Dendritic cell treated with granulocyte-macrophage colony-stimulating factor and Interleukin-4, amounts not matched to agents 40 ng/mL and 50 ng/mL, for 4 days (primary cell): ENCODE measurements at regions of chr10 and their contacts with region 1.

Region 1: DNA sequence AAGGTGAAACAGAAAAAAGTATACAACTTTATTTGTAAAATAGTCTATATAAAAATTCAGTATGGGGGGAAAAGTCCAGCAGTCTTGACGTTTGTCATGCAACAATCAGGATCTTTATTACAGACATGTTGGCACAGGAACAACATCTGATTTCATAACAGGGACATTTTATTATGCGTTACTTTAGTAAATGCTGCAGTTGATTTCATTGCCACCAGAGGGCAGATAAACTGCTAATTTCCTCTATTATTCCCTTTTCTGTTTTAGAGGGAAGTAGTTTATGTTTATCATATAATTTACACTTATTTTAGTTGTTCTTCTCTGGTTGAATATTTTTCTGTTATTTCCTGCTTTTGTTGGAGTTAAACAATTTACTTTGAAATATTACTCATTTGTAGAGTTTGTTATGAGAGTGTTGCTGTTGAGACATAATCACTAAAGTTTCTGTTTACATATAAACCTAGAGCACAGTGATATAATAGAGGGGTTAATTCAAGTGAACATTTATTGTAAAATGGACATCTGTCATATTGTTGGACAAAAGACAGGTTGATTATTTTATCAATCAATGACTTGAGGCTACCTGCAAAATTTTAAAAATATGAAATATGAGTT is 3.3 kb downstream of the PLXDC2 start:
- H3K4me3 Mint-ChIP-seq: peak overlapping the region; percentile 60
- H3K27ac Mint-ChIP-seq: peak overlapping the region; percentile 65
- H3K4me1 Mint-ChIP-seq: peaks cover 39% of the 10 kb centered on the region
- H3K27me3 Mint-ChIP-seq: no peaks in the 10 kb centered on the region

Region 2: DNA sequence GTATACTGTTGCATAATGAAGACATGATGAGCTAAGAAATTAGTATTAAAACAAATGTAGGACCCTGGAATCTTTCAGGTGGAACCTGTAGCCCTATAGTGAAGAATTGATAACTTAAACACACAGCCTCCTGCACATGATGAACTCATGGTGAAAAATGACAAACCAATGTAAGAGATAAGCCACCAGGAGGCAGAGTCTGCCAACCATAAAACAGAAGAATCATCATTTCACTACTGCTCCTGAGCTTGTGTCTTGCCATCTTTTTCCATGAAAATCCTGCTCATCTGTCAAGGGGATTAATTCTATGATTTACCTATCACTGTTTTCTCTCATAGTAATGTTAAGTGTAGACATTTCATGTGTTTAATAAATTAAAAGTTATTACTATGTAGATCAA is 407.0 kb before region 1 on chr10:
- intact Hi-C with region 1: loop called (anchors 10 kb)
- H3K4me3 Mint-ChIP-seq: no peak overlapping the region
- H3K27ac Mint-ChIP-seq: no peak overlapping the region
- H3K4me1 Mint-ChIP-seq: no peaks in the 10 kb centered on the region
- H3K27me3 Mint-ChIP-seq: no peaks in the 10 kb centered on the region

Region 3: GRCh38 chr10:19638182-19638895 is 181.2 kb before region 1 on chr10:
- intact Hi-C with region 1: loop called (anchors 1 kb)
- H3K4me3 Mint-ChIP-seq: peak overlapping the region; percentile 70
- H3K27ac Mint-ChIP-seq: peak overlapping the region; percentile 94
- H3K4me1 Mint-ChIP-seq: peaks cover 23% of the 10 kb centered on the region
- H3K27me3 Mint-ChIP-seq: no peaks in the 10 kb centered on the region

Region 4: DNA sequence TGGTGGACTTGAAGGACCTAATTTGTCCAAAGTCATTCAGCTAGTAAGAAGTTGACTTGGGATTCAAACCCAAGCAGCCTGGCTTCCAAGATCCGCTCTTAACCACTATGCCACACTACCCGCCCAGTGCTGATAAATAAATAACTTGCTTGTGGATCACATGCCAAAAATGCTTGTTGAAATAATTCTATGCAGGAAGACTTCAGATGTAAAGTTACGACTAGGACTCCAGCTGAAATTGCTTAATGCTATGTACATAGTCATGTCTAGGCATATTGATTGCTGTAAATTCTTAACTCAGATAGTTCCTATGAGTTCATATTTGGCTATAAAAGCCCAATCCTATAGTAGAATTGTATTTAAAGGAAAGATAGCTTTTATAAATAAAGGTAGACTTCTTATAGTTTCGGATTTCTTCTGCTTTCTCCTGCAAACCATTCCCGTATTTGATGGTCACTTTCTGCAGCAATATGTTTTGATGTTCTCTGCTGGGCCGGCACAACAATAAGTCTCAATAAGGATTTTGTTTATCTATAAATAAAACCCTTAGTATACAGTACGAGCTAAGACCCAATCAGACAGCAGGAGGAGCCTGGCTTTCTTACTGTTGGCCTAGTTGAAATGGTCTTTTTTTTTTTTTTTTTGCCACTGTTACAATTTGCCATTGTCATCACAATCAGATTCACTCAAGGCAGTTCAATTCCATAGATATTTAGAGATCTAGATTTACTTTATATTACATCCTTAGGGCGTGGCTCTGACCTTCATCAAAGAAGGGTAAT is 73.0 kb after region 1 on chr10:
- intact Hi-C with region 1: loop called (anchors 10 kb)
- H3K4me3 Mint-ChIP-seq: no peak overlapping the region
- H3K27ac Mint-ChIP-seq: no peak overlapping the region
- H3K4me1 Mint-ChIP-seq: peaks cover 49% of the 10 kb centered on the region
- H3K27me3 Mint-ChIP-seq: no peaks in the 10 kb centered on the region

Region 5: DNA sequence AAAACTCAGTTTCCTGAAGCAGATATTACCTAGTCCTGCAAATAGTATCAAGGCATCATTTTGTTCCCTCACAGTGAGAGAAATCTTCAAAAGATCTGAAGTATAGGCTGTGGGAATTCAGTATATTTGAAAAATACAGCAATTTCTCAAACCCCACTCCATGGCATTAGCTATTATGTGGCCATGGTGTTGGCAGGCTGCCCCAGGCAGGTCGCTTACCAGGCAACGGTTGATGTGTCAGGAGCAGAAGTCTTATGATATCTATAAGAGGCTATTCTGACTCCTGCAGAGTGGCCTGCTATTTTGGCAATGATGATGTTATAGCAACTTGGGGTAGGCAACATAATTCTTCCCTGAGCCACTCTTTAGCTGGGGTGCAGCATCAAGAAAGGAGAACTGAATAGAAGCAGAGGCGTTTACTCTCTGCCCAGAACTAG is 184.6 kb after region 1 on chr10:
- intact Hi-C with region 1: loop called (anchors 5 kb)
- H3K4me3 Mint-ChIP-seq: peak overlapping the region; percentile 40
- H3K27ac Mint-ChIP-seq: peak overlapping the region; percentile 90
- H3K4me1 Mint-ChIP-seq: peaks cover 64% of the 10 kb centered on the region
- H3K27me3 Mint-ChIP-seq: no peaks in the 10 kb centered on the region

Region 6: DNA sequence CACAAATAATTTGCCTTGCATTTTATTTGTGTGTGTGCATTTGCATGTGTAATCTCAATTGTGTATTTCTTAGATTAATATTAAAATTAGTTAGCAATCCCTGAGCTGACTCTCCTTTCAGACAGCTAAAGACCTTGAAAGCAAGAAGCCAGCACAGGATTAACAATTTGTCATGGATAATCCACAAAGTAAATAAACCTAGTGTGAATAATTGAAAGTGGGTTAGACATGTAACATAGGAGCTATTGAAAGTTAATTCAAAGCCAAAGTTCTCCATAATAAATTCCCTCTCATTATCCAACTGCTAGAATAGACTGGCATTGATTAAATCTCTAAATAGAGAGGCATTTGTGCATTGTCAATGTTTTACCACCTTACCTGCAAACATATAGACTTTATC is 322.8 kb after region 1 on chr10:
- intact Hi-C with region 1: loop called (anchors 5 kb)
- H3K4me3 Mint-ChIP-seq: no peak overlapping the region
- H3K27ac Mint-ChIP-seq: no peak overlapping the region
- H3K4me1 Mint-ChIP-seq: no peaks in the 10 kb centered on the region
- H3K27me3 Mint-ChIP-seq: no peaks in the 10 kb centered on the region

Region 7: GRCh38 chr10:20776384-20777118 is 957.0 kb after region 1 on chr10:
- intact Hi-C with region 1: loop called (anchors 10 kb)
- H3K4me3 Mint-ChIP-seq: no peak overlapping the region
- H3K27ac Mint-ChIP-seq: no peak overlapping the region
- H3K4me1 Mint-ChIP-seq: peaks cover 26% of the 10 kb centered on the region
- H3K27me3 Mint-ChIP-seq: no peaks in the 10 kb centered on the region